ENCODE measurements at regions of chr7 and their contacts with region 1.

Region 1: GRCh38 chr7:108497082-108497725 is 28.7 kb downstream of the PNPLA8 start:
- DNase-seq: peak; percentile 66
- H3K4me3 Mint-ChIP-seq: no peak overlapping the region
- H3K27ac Mint-ChIP-seq: no peak overlapping the region
- H3K4me1 Mint-ChIP-seq: peaks cover 5% of the 10 kb centered on the region
- H3K27me3 Mint-ChIP-seq: no peaks in the 10 kb centered on the region
- CTCF ChIP-seq: peak; percentile 77

Region 2: GRCh38 chr7:108114117-108114841 is 382.9 kb before region 1 on chr7:
- CTCF ChIA-PET with region 1: interaction called, 10 read pairs
- POLR2A ChIA-PET with region 1: no interaction called
- intact Hi-C with region 1: no loop called
- DNase-seq: peak; percentile 48
- H3K4me3 Mint-ChIP-seq: no peak overlapping the region
- H3K27ac Mint-ChIP-seq: no peak overlapping the region
- H3K4me1 Mint-ChIP-seq: no peaks in the 10 kb centered on the region
- H3K27me3 Mint-ChIP-seq: no peaks in the 10 kb centered on the region
- CTCF ChIP-seq: peak; percentile 61

Region 3: DNA sequence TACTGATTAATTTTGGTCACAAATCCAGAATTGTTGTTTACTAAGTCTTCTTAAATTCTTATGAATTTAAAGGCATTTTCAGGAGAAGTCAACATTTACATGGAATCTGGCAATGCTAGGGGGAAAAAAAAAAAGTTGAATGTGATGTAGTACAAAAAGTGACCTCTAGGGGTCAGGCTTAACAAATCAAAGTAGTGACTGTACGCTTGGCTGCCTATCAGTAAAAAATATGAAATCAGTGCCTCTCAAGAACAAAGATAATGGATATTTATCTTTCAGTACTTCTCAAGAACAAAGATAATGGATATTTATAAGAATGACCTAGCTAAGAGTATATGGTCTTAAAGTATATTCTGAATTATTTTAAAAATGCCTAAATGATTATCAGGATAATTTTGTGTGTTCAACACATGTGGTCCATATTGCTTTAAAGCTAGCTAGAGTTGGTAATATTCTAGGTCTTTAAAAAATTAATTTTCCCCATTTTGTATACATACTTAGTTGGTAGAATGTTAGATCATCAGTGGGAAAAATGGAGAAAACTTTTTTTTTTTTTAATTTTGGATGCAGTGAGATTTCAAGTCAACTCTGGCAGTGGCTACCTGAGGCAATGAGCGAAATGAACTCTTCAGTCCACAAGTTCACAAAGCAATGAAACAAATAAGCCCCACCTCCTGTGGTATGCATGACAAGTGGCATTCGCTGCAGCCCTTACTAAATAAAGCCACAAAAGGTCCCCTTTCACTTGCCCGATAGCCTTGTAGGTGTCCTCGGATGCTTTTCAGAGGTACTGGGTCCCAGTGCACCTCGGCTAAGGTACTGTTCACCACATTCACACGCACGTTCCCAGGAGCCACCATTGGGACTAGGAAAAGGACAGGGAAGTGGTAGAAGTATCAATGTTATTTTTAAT is 315.9 kb before region 1 on chr7:
- CTCF ChIA-PET with region 1: interaction called, 38 read pairs
- POLR2A ChIA-PET with region 1: interaction called, 3 read pairs
- intact Hi-C with region 1: loop called (anchors 1 kb)
- DNase-seq: peak; percentile 67
- H3K4me3 Mint-ChIP-seq: no peak overlapping the region
- H3K27ac Mint-ChIP-seq: no peak overlapping the region
- H3K4me1 Mint-ChIP-seq: no peaks in the 10 kb centered on the region
- H3K27me3 Mint-ChIP-seq: peaks cover 18% of the 10 kb centered on the region
- CTCF ChIP-seq: peak; percentile 58

Region 4: DNA sequence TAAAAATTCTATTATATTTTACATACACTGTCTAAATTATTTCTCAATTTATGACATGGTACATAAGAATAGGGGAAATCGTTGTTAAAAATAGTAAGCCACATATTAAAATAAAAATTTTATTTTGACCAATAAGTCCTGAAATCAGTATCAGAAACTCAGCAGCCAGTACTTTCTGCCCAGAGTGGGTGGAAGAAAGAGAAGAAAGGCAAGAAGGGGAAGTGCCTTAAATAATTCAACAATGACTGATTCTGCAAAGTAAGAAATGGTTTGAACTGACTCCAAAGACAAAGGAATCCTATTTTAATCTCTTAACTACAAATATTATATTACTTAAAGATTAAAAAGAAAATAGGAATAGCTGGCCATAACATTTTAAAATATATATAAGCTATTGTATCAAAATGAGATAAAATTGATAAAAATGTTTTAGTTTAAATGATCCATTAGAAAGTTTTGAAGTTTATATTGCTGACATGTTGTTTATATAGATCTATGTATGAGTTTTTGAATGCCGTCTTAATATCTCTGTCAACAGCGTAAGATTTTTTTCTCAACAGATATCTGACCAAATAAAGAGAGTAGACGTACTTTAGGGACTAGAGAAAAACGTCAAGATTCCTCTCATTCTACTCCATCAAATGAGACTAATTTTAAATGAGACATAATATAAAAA is 10.8 kb before region 1 on chr7:
- CTCF ChIA-PET with region 1: interaction called, 12 read pairs
- POLR2A ChIA-PET with region 1: interaction called, 4 read pairs
- intact Hi-C with region 1: no loop called
- DNase-seq: no peak
- H3K4me3 Mint-ChIP-seq: no peak overlapping the region
- H3K27ac Mint-ChIP-seq: no peak overlapping the region
- H3K4me1 Mint-ChIP-seq: no peaks in the 10 kb centered on the region
- H3K27me3 Mint-ChIP-seq: no peaks in the 10 kb centered on the region
- CTCF ChIP-seq: no peak

Region 5: GRCh38 chr7:108515013-108515412 is 17.8 kb after region 1 on chr7:
- CTCF ChIA-PET with region 1: interaction called, 12 read pairs
- POLR2A ChIA-PET with region 1: no interaction called
- intact Hi-C with region 1: no loop called
- DNase-seq: no peak
- H3K4me3 Mint-ChIP-seq: no peak overlapping the region
- H3K27ac Mint-ChIP-seq: no peak overlapping the region
- H3K4me1 Mint-ChIP-seq: peaks cover 12% of the 10 kb centered on the region
- H3K27me3 Mint-ChIP-seq: no peaks in the 10 kb centered on the region
- CTCF ChIP-seq: no peak

Region 6: GRCh38 chr7:108535257-108535656 is 38.1 kb after region 1 on chr7:
- CTCF ChIA-PET with region 1: no interaction called
- POLR2A ChIA-PET with region 1: no interaction called
- intact Hi-C with region 1: no loop called
- DNase-seq: no peak
- H3K4me3 Mint-ChIP-seq: no peak overlapping the region
- H3K27ac Mint-ChIP-seq: no peak overlapping the region
- H3K4me1 Mint-ChIP-seq: no peaks in the 10 kb centered on the region
- H3K27me3 Mint-ChIP-seq: no peaks in the 10 kb centered on the region
- CTCF ChIP-seq: no peak

Region 7: GRCh38 chr7:108643138-108643537 is 145.9 kb after region 1 on chr7:
- CTCF ChIA-PET with region 1: no interaction called
- POLR2A ChIA-PET with region 1: no interaction called
- intact Hi-C with region 1: no loop called
- DNase-seq: no peak
- H3K4me3 Mint-ChIP-seq: no peak overlapping the region
- H3K27ac Mint-ChIP-seq: no peak overlapping the region
- H3K4me1 Mint-ChIP-seq: no peaks in the 10 kb centered on the region
- H3K27me3 Mint-ChIP-seq: peaks cover 65% of the 10 kb centered on the region
- CTCF ChIP-seq: no peak

Region 8: DNA sequence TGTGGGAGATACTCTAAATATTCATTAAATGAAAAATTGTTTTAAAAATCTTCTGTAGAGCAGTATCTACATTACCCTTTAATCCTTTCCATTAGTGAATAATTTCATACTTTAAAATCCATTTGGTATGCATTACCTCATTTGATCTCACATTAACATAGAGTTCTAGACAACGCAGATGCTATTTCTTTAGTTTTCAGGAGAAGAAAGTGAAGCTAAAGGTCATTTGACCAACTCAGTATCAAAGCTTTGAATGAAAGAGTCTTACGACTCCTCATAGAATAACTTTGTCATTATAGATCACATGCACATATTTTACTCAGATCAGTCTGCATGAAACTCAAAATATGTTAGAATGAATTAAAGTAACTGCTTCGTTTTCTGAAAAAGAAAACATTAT is 532.7 kb after region 1 on chr7:
- CTCF ChIA-PET with region 1: no interaction called
- POLR2A ChIA-PET with region 1: no interaction called
- intact Hi-C with region 1: no loop called
- DNase-seq: no peak
- H3K4me3 Mint-ChIP-seq: no peak overlapping the region
- H3K27ac Mint-ChIP-seq: no peak overlapping the region
- H3K4me1 Mint-ChIP-seq: no peaks in the 10 kb centered on the region
- H3K27me3 Mint-ChIP-seq: peaks cover under 1% of the 10 kb centered on the region
- CTCF ChIP-seq: no peak

Measured in MCF 10A (cell line).